ENCODE measurements at regions of chr1 and their contacts with region 1.

Region 1: GRCh38 chr1:234722904-234723720 is 113.1 kb upstream of the IRF2BP2 start:
- DNase-seq: peak; percentile 44 to 94 (median 76)

Region 2: GRCh38 chr1:234533975-234534876 is 188.9 kb before region 1 on chr1:
- intact Hi-C with region 1: loop called (anchors 10 kb)
- DNase-seq: peak in 38 of 42 donors; percentile 39 to 90 (median 76)

Region 3: DNA sequence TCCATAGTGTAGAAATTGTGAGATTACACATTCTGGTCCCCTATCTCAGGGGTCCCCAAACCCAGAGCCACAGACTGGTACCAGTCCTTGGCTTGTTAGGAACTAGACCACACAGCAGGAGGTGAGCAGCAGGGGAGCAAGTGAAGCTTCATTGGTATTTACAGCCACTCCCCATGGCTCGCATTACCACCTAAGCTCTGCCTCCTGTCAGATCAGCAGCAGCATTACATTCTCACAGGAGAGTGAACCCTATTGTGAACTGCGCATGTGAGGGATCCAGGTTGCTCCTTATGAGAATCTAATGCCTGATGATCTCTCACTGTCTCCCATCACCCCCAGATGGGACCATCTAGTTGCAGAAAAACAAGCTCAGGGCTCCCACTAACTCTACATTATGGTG is 116.6 kb after region 1 on chr1:
- intact Hi-C with region 1: loop called (anchors 10 kb)
- DNase-seq: no peak

Region 4: DNA sequence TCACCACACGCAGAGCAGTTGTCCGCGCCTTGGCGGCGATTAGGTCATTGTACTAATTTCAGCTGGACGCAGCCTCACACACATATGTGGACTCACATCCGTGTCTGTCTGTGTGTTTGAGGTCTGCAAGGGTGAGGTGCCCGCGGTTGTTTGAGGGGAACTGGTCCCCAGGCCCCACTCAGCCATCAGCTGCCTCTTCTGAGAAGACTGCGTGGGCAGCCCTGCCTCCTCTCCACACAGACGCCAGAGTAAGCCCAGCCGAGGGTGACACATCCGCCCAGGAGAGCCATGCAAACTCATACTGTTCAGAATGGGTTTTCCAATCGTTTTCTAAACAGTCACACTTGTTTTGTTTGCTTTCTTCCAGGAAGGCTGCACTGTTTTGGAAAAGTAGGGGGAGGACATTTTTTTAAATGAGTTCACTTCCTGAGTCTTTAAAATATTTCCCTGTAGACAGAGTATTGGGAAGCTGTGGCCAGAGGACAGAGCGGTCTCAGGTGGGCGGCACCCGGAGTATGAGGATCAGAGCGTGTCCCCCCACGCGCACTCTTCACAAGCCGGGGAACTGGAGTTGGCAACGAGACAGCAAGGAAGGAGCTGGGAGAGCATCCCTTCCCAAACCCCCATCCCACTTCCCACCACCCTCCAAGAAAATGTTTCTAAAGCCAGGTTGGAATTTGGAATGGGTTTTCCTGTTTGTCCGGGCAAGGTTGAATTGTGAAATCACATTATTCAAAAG is 352.2 kb after region 1 on chr1:
- intact Hi-C with region 1: loop called (anchors 5 kb)
- DNase-seq: peak in 28 of 42 donors; percentile 19 to 80 (median 47)

Measured in head of caudate nucleus (tissue), 42 donors.